ENCODE measurements at regions of chr2 and their contacts with region 1.

Region 1: GRCh38 chr2:36663851-36664695 is 32.4 kb upstream of the VIT start:
- DNase-seq: peak; percentile 19
- ATAC-seq: peak; percentile 62
- H3K4me3 Mint-ChIP-seq: no peak overlapping the region
- H3K27ac Mint-ChIP-seq: no peak overlapping the region
- H3K4me1 Mint-ChIP-seq: no peaks in the 10 kb centered on the region
- H3K27me3 Mint-ChIP-seq: peaks cover 3% of the 10 kb centered on the region
- CTCF ChIP-seq: peak; percentile 79

Region 2: DNA sequence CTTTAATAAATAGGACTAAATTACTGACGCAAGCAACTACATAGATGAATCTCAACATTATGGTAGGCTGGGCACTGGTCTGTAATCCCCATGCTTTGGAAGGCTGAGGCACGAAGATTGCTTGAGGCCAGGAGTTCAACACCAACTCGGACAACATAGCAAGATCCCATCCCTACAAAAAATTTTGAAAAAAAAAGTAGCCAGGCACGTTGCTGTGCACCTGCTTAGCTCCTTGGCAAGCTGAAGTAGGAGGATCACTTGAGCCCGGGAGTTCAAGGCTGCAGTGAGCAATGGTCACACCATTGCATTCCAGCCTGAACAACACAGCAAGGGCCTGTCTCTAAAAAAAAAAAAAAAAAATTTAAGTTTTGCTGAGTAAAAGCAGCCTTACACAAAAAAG is 10.9 kb before region 1 on chr2:
- CTCF ChIA-PET with region 1: interaction called, 13 read pairs
- POLR2A ChIA-PET with region 1: no interaction called
- intact Hi-C with region 1: no loop called
- DNase-seq: no peak
- ATAC-seq: no peak
- H3K4me3 Mint-ChIP-seq: no peak overlapping the region
- H3K27ac Mint-ChIP-seq: no peak overlapping the region
- H3K4me1 Mint-ChIP-seq: no peaks in the 10 kb centered on the region
- H3K27me3 Mint-ChIP-seq: no peaks in the 10 kb centered on the region
- CTCF ChIP-seq: no peak

Region 3: GRCh38 chr2:36677386-36677785 is 13.3 kb after region 1 on chr2:
- CTCF ChIA-PET with region 1: interaction called, 18 read pairs
- POLR2A ChIA-PET with region 1: no interaction called
- intact Hi-C with region 1: no loop called
- DNase-seq: no peak
- ATAC-seq: peak; percentile 13
- H3K4me3 Mint-ChIP-seq: no peak overlapping the region
- H3K27ac Mint-ChIP-seq: no peak overlapping the region
- H3K4me1 Mint-ChIP-seq: peaks cover 15% of the 10 kb centered on the region
- H3K27me3 Mint-ChIP-seq: peaks cover 2% of the 10 kb centered on the region
- CTCF ChIP-seq: no peak